ENCODE measurements at regions of chr17 and their contacts with region 1.

Region 1: DNA sequence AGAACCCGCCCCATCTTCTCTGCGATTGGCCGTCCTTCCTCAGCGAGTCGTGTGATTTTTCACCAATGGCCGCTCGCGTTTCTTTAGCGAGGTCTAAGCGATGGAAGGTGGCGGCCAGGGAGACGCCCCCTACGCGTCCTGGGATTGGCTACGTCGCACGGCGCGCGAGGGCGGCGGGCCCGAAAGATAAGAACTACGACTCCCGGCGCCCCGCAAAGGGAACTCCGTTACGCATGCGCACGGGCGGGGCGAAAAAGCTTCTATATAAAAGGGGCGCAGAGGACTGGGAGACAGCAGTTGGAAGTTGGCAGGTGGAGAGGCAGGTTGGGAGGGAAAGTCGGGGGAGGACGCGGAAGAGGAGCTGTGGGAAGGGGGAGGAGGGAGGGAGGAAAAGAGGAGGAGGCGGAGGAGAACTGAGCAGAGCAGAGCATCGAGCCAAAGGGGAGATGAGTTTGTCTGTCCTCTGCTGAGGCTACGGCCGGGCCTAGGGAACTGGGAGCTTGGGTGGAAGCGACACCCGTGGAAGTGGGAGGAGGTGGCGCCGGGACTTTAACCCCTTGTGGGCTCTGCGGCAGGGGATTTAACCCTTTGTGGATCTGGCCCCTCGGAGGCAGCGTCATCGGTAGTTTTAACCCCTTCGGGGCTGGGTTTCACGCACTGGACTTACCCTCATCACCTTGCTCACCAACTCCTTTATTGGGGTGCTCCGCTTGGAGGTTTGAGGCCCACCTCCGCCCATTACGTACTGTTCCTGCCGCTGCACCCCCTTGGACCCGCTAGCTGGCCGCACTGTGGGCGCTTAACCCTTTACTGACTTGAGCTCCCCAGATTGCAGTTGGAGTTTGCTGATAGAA is at the start of gene HEXIM1:
- DNase-seq: peak; percentile 98 to 100 (median 100)
- ATAC-seq: peak; percentile 87
- H3K4me3 ChIP-seq: peak within 1 kb of the TSS; percentile 93
- H3K4me3 Mint-ChIP-seq: peak within 1 kb of the TSS; percentile 89 to 100 (median 99)
- H3K27ac ChIP-seq: peak within 1 kb of the TSS; percentile 91
- H3K27ac Mint-ChIP-seq: peak within 1 kb of the TSS; percentile 99 to 100 (median 100)
- H3K4me1 ChIP-seq: peaks cover 21 to 35% of the 10 kb centered on the region in 2 donors
- H3K4me1 Mint-ChIP-seq: peaks cover 18 to 68% (median 54%) of the 10 kb centered on the region in 7 donors
- H3K27me3 ChIP-seq: no peaks in the 10 kb centered on the region
- H3K27me3 Mint-ChIP-seq: peaks cover 0 to 7% (median 0%) of the 10 kb centered on the region in 5 donors
- total RNA-seq, gene HEXIM1: 28.5 to 41.3 (median 37.6) TPM

Region 2: GRCh38 chr17:45051060-45051719 is 97.2 kb before region 1 on chr17 and contains the start of gene DCAKD:
- CTCF ChIA-PET with region 1: no interaction called
- POLR2A ChIA-PET with region 1: interaction called, 13 read pairs
- intact Hi-C with region 1: loop called in 1 of 2 experiments (anchors 1 kb)
- DNase-seq: peak; percentile 78 to 93 (median 84)
- ATAC-seq: peak; percentile 99
- H3K4me3 ChIP-seq: peak within 1 kb of the TSS; percentile 61
- H3K4me3 Mint-ChIP-seq: peak within 1 kb of the TSS; percentile 87 to 96 (median 90)
- H3K27ac ChIP-seq: peak within 1 kb of the TSS; percentile 91
- H3K27ac Mint-ChIP-seq: peak within 1 kb of the TSS; percentile 85 to 98 (median 96)
- H3K4me1 ChIP-seq: peaks cover 19 to 26% of the 10 kb centered on the region in 2 donors
- H3K4me1 Mint-ChIP-seq: peaks cover 11 to 54% (median 41%) of the 10 kb centered on the region in 7 donors
- H3K27me3 ChIP-seq: no peaks in the 10 kb centered on the region
- H3K27me3 Mint-ChIP-seq: no peaks in the 10 kb centered on the region
- total RNA-seq, gene DCAKD: 14.2 to 36.8 (median 29.8) TPM

Region 3: GRCh38 chr17:45161019-45161825 is 12.8 kb after region 1 on chr17:
- CTCF ChIA-PET with region 1: interaction called, 55 read pairs
- POLR2A ChIA-PET with region 1: interaction called, 516 read pairs
- intact Hi-C with region 1: loop called (anchors 1 kb)
- DNase-seq: peak; percentile 89 to 100 (median 99)
- ATAC-seq: peak; percentile 93
- H3K4me3 ChIP-seq: peak overlapping the region; percentile 95
- H3K4me3 Mint-ChIP-seq: peak overlapping the region; percentile 88 to 100 (median 96)
- H3K27ac ChIP-seq: peak overlapping the region; percentile 98
- H3K27ac Mint-ChIP-seq: peak overlapping the region; percentile 97 to 100 (median 98)
- H3K4me1 ChIP-seq: peaks cover 15 to 27% of the 10 kb centered on the region in 2 donors
- H3K4me1 Mint-ChIP-seq: peaks cover 29 to 48% (median 43%) of the 10 kb centered on the region in 7 donors
- H3K27me3 ChIP-seq: no peaks in the 10 kb centered on the region
- H3K27me3 Mint-ChIP-seq: no peaks in the 10 kb centered on the region

Region 4: DNA sequence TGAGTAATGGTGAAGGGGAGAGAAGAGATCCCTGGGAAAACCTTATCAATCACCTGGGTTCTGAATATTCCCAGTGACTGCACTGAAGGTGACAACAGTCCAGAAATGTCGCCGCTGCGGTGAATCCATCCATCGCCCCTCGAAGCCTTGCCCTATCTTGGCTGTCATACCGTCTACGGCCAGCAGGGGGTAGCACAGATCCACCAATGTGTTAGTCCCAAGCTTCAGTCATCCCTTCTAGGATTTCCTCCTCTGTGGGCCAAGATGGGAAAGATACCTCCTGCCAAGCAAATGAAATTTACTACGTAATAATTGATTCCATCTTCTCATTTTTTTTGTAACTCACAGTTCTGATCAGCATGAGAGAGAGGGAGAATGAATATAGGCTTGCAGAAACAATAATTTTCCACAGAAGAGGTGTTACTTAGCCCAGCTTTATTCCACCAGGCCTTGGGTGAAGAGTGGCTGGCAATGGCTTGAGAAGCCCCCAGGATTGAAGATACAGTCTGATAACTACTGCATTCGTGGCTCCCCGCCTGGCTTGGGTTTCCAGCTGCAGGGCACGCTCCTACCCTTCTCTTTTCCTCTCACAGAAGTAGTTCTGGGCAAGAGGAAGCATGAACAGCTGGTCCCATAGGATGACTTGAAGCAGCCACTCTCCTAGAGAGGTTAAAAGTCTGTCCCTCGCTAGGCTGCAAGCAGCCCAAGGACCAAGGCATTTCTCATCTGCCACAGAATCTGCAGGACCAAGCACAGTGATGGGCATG is 70.7 kb after region 1 on chr17:
- CTCF ChIA-PET with region 1: interaction called, 16 read pairs
- POLR2A ChIA-PET with region 1: interaction called, 108 read pairs
- intact Hi-C with region 1: no loop called
- DNase-seq: peak; percentile 74 to 89 (median 81)
- ATAC-seq: peak; percentile 74
- H3K4me3 ChIP-seq: peak overlapping the region; percentile 72
- H3K4me3 Mint-ChIP-seq: peak overlapping the region; percentile 81 to 99 (median 90)
- H3K27ac ChIP-seq: peak overlapping the region; percentile 96
- H3K27ac Mint-ChIP-seq: peak overlapping the region; percentile 37 to 94 (median 87)
- H3K4me1 ChIP-seq: peaks cover 24 to 30% of the 10 kb centered on the region in 2 donors
- H3K4me1 Mint-ChIP-seq: peaks cover 29 to 52% (median 37%) of the 10 kb centered on the region in 7 donors
- H3K27me3 ChIP-seq: no peaks in the 10 kb centered on the region
- H3K27me3 Mint-ChIP-seq: no peaks in the 10 kb centered on the region

Region 5: DNA sequence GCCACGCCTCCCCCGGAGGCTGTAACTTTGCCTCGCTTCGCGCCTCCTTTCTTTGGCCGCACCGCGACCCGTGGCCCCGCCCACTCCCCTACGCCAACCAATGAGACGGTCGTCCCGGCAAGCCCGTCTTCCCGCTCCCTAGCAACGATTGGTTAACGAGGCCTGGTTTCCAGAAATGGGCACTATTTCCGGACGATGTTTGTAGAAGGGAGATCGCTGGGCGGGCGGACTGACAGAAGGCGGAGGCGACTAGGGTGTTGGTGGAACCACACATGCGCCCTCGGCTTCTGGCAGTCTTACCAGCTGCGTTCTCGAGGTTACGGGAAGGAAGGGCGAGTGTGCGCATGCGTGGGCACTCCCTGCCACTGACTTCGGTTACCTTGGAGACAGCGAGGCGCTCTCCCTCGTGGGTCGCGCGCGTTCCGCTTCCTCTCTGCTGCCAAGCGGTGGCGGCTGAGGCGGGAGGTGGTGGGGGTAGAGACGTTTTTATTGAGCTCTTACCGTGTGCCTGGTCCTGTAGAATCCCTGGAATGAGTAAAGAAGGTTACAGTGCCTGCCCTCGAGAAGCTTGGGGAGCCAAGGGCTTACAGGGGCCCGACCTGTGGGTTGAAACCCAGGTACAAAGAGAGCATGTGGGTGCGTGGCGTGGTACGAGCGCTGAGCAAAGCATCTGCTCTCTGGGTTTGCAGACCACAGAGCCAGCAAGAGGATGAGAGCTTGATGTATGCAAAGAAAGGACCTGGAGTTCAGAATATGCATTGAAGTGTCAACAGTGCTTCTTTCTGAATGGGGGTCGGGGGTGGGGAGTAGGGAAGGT is 168.9 kb after region 1 on chr17:
- CTCF ChIA-PET with region 1: interaction called, 3 read pairs
- POLR2A ChIA-PET with region 1: interaction called, 12 read pairs
- intact Hi-C with region 1: loop called (anchors 1 to 5 kb)
- DNase-seq: peak; percentile 97 to 100 (median 100)
- ATAC-seq: peak; percentile 92
- H3K4me3 ChIP-seq: peak overlapping the region; percentile 80
- H3K4me3 Mint-ChIP-seq: peak overlapping the region; percentile 81 to 97 (median 92)
- H3K27ac ChIP-seq: peak overlapping the region; percentile 93
- H3K27ac Mint-ChIP-seq: peak overlapping the region; percentile 90 to 98 (median 95)
- H3K4me1 ChIP-seq: peaks cover 47 to 57% of the 10 kb centered on the region in 2 donors
- H3K4me1 Mint-ChIP-seq: peaks cover 60 to 88% (median 82%) of the 10 kb centered on the region in 7 donors
- H3K27me3 ChIP-seq: no peaks in the 10 kb centered on the region
- H3K27me3 Mint-ChIP-seq: peaks cover 0 to 4% (median 0%) of the 10 kb centered on the region in 5 donors

Region 6: GRCh38 chr17:45371414-45372327 is 223.3 kb after region 1 on chr17:
- CTCF ChIA-PET with region 1: no interaction called
- POLR2A ChIA-PET with region 1: no interaction called
- intact Hi-C with region 1: no loop called
- DNase-seq: peak in 1 of 9 donors; percentile 67
- ATAC-seq: peak; percentile 69
- H3K4me3 ChIP-seq: no peak overlapping the region
- H3K4me3 Mint-ChIP-seq: peak overlapping the region; percentile 33 to 88 (median 76)
- H3K27ac ChIP-seq: no peak overlapping the region
- H3K27ac Mint-ChIP-seq: peak overlapping the region in 1 of 9 donors; percentile 2
- H3K4me1 ChIP-seq: no peaks in the 10 kb centered on the region
- H3K4me1 Mint-ChIP-seq: peaks cover 12 to 18% (median 16%) of the 10 kb centered on the region in 7 donors
- H3K27me3 ChIP-seq: no peaks in the 10 kb centered on the region
- H3K27me3 Mint-ChIP-seq: peaks cover 11 to 31% (median 19%) of the 10 kb centered on the region in 5 donors